HepG2 (cell line): ENCODE measurements at regions of chr22 and their contacts with region 1.

Region 1: GRCh38 chr22:38109371-38110001 is 998 bp downstream of the BAIAP2L2 start:
- DNase-seq: no peak
- ATAC-seq: no peak
- H3K4me3 ChIP-seq: no peak overlapping the region
- H3K27ac ChIP-seq: peak overlapping the region; percentile 58
- H3K4me1 ChIP-seq: peaks cover 73% of the 10 kb centered on the region
- H3K27me3 ChIP-seq: no peaks in the 10 kb centered on the region
- CTCF ChIP-seq: no peak
- EP300 ChIP-seq: no peak
- POLR2A ChIP-seq: no peak
- RAD21 ChIP-seq: no peak

Region 2: DNA sequence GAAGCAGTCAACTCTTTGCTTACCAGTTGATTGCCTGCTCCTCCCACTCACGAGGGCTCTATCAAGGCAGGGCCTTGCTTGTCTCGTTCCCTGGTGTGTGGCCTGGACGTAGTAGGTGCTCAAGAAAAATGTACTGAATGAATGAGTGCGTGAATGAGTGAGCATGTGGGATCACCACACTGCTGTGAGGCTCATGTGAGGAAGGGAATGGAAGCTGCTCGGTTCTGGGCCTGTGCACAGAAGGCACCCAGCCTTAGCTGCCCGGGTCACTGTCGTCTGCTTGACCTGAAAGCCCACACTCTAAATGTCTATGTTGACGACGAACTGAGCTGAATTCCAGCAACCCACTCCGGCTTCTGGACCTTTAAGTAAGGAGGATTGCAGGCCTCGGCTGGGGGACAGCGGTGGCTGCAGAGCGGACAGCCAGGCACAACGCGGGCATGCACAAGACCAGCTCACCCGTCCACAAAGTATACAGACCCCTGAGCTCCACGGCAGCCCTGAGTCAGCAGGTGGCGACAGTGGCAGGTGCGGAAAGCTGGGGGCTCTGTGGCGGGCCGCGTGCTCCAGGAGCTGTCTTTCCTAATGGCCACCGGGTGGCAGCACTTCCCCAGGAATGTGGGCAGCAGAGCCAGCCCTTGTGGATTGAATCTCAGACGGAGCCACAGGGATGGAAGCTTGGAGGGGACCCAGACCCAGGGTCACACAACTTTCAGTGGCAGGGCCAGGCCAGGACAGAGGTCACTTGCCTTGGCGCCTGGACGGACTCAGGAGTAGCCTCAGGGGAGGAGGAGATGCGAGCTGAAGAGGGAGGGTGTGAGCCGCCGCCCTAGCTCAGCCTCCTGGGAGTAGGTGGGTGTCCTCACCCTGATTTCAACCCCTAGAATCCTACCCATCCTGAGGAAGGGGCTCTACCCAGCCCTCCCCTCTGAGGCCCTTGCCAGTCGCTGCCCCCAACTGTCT is 57.3 kb before region 1 on chr22:
- CTCF ChIA-PET with region 1: no interaction called
- POLR2A ChIA-PET with region 1: interaction called, 5 read pairs
- in situ Hi-C with region 1: no loop called
- intact Hi-C with region 1: loop called (anchors 2 kb)
- DNase-seq: peak; percentile 84
- ATAC-seq: peak; percentile 89
- H3K4me3 ChIP-seq: peak overlapping the region in 2 of 3 experiments; percentile 27 to 57; a peak in 3 of 6 replicates
- H3K27ac ChIP-seq: no peak overlapping the region
- H3K4me1 ChIP-seq: peaks cover 43% of the 10 kb centered on the region
- H3K27me3 ChIP-seq: peaks cover 2 to 22% of the 10 kb centered on the region in 2 experiments; a peak in 3 of 5 replicates
- CTCF ChIP-seq: peak; percentile 100
- EP300 ChIP-seq: no peak
- POLR2A ChIP-seq: no peak
- RAD21 ChIP-seq: peak; percentile 99

Region 3: GRCh38 chr22:38162881-38163843 is 53.7 kb after region 1 on chr22:
- CTCF ChIA-PET with region 1: no interaction called
- POLR2A ChIA-PET with region 1: interaction called, 15 read pairs
- in situ Hi-C with region 1: no loop called
- intact Hi-C with region 1: no loop called
- DNase-seq: no peak
- ATAC-seq: no peak; the same call in 2 of the 3 replicates
- H3K4me3 ChIP-seq: no peak overlapping the region
- H3K27ac ChIP-seq: peak overlapping the region; percentile 67
- H3K4me1 ChIP-seq: peaks cover 39% of the 10 kb centered on the region
- H3K27me3 ChIP-seq: no peaks in the 10 kb centered on the region
- CTCF ChIP-seq: no peak
- EP300 ChIP-seq: no peak
- POLR2A ChIP-seq: no peak
- RAD21 ChIP-seq: no peak

Region 4: DNA sequence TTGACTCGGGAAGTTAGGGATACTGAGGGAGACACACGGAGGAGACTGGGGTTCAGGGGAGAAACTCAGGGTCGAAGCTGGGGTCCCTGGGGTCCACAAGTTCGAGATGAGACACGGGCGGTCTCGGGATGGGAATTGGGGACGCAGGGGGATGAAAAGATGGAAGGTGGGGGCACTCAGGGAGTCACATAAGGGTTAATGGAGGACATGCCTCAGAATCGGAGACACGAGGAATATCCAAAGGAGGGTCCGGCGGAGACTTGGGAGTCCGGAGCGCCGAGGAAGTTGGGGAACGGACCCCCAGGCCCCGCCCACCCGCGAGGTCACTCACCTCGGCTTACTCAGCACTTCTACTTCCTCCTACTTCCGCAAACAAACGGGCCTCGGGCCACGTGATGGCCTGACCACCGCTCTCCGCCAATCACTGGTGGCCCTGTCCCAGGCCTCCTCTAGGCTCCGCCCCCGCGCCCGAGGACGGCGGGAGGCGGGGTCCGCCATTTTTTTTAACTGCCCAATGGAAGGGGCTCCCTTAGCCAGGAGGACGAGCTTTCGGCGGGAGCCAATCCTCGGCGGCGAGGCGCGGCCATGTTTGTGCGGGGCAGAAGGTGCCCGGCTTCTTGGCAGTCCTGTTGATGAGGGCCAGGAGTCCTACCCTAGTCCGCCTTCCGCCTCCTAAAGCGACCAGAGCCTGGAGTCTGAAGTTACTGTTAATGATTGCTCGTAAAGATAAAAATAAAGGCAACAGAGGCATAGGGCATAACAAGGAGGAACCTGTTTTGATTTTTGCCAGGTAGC is 72.2 kb after region 1 on chr22 and contains the start of gene PLA2G6:
- CTCF ChIA-PET with region 1: no interaction called
- POLR2A ChIA-PET with region 1: interaction called, 60 read pairs
- in situ Hi-C with region 1: no loop called
- intact Hi-C with region 1: no loop called
- DNase-seq: peak; percentile 97
- ATAC-seq: peak; percentile 86
- H3K4me3 ChIP-seq: peak within 1 kb of the TSS; percentile 67 to 86 (median 77)
- H3K27ac ChIP-seq: peak within 1 kb of the TSS; percentile 82
- H3K4me1 ChIP-seq: peaks cover 59% of the 10 kb centered on the region
- H3K27me3 ChIP-seq: no peaks in the 10 kb centered on the region; a peak in 1 of 5 replicates
- CTCF ChIP-seq: no peak
- EP300 ChIP-seq: peak in 1 of 2 experiments; percentile 38; a peak in 1 of 4 replicates
- POLR2A ChIP-seq: peak; percentile 57 to 65
- RAD21 ChIP-seq: 0 out of 2 replicates have a peak, but pooled peaks have one; percentile 9
- total RNA-seq, gene PLA2G6: 1.8 and 4.8 TPM in 2 replicates

Region 5: DNA sequence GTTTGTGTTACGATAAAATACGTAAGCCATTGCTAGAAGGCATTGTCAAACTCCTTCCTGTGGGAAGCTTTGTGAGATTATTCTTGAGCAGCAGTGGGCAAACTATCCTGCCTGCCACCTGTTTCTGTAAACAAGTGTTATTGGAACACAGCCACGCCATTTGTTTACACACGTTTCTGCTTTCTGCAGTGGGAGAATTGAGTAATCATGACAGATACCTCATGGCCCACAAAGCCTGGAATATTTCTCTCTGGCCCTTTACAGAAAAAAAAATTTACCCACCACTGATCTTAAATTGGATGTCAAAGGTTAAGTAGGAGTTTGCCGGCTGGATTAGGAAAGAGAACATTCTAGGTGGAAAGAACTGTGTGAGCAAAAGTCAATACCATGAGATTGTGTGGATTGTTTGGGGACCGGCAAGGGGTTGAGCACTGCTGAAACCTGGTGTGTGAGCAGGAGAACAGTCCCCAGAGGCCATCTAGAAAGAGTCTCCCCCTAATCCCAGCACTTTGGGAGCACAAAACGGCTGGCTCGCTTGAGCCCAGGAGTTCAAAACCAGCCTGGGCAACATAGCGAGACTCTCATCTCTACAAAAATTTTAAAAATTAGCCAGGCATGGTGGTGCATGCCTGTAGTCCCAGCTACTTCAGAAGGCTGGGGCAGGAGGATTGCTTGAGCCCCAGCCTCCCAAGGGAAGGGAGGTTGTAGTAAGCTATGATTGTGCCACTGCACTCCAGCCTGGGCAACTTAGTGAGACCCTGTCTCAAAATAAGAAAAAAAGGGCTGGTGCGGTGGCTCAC is 78.1 kb after region 1 on chr22:
- CTCF ChIA-PET with region 1: no interaction called
- POLR2A ChIA-PET with region 1: interaction called, 10 read pairs
- in situ Hi-C with region 1: no loop called
- intact Hi-C with region 1: no loop called
- DNase-seq: peak; percentile 56
- ATAC-seq: peak; percentile 60
- H3K4me3 ChIP-seq: no peak overlapping the region
- H3K27ac ChIP-seq: peak overlapping the region; percentile 16
- H3K4me1 ChIP-seq: peaks cover 45% of the 10 kb centered on the region
- H3K27me3 ChIP-seq: no peaks in the 10 kb centered on the region
- CTCF ChIP-seq: no peak
- EP300 ChIP-seq: peak in 1 of 2 experiments; percentile 64; a peak in 2 of 4 replicates
- POLR2A ChIP-seq: no peak
- RAD21 ChIP-seq: no peak

Region 6: GRCh38 chr22:38201710-38202436 is 92.4 kb after region 1 on chr22 and contains the start of gene MAFF:
- CTCF ChIA-PET with region 1: no interaction called
- POLR2A ChIA-PET with region 1: interaction called, 17 read pairs
- in situ Hi-C with region 1: loop called (anchors 10 kb)
- intact Hi-C with region 1: loop called (anchors 5 kb)
- DNase-seq: peak; percentile 92
- ATAC-seq: peak; percentile 82
- H3K4me3 ChIP-seq: peak within 1 kb of the TSS; percentile 78 to 88 (median 83)
- H3K27ac ChIP-seq: peak within 1 kb of the TSS; percentile 90
- H3K4me1 ChIP-seq: peaks cover 51% of the 10 kb centered on the region
- H3K27me3 ChIP-seq: no peaks in the 10 kb centered on the region
- CTCF ChIP-seq: no peak
- EP300 ChIP-seq: no peak
- POLR2A ChIP-seq: peak; percentile 68 to 80
- RAD21 ChIP-seq: 0 out of 2 replicates have a peak, but pooled peaks have one; percentile 30
- total RNA-seq, gene MAFF: 3.1 and 5.4 TPM in 2 replicates

Region 7: DNA sequence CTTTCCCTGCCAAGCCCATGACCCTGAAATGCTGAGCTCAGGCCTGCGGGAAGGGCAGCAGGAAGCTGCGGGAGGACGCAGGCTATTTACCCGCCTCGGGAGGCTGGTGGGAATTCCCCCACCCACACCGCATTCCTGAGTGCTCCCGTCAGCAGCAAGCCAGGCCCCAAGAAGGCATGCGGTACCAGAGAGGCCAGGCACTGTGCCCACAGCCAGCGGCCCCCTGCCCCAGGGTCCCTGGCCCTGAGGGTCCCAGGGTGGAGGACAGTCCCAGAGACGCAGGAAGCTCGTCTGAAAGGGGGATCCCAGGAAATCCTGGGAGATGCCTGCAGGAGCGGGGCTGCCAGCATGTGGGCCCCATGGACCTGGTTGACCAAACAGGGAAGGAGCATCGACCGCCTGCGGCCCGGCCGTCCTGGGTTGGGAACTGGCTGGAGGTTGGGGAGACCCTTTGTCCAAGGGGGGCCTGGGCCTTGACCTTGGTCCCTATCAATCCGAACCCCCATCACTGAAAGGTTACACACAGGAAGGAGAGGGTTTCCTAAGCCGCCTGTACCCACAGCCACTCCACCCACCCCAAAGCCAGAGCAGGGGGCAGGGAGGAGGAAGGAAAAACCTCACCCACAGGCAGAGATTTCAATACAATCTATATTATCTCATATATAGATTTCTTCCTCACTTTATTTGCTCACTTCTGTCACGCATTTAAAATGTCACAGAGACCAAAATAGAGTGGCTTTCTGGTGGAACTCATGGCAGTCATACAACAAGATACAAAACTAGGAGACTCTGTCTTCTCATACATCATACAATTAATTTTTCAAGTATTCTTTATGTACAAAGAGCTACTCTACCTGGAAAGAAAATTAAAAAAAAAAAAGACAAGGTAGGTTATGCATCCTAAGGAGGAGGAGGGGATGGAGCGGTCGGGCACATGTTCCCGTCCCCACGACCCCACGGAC is 109.5 kb after region 1 on chr22:
- CTCF ChIA-PET with region 1: no interaction called
- POLR2A ChIA-PET with region 1: interaction called, 13 read pairs
- in situ Hi-C with region 1: no loop called
- intact Hi-C with region 1: no loop called
- DNase-seq: peak; percentile 76
- ATAC-seq: peak; percentile 84
- H3K4me3 ChIP-seq: peak overlapping the region in 1 of 3 experiments; percentile 43; a peak in 1 of 6 replicates
- H3K27ac ChIP-seq: peak overlapping the region; percentile 65
- H3K4me1 ChIP-seq: peaks cover 25% of the 10 kb centered on the region
- H3K27me3 ChIP-seq: no peaks in the 10 kb centered on the region
- CTCF ChIP-seq: no peak
- EP300 ChIP-seq: peak in 1 of 2 experiments; percentile 43; a peak in 1 of 4 replicates
- POLR2A ChIP-seq: peak in 1 of 2 experiments; percentile 29; a peak in 1 of 4 replicates
- RAD21 ChIP-seq: peak; percentile 54